Esophagus squamous epithelium (tissue), 5 donors: ENCODE measurements at regions of chr22 and their contacts with region 1.

Region 1: GRCh38 chr22:45429981-45430775 is 16.7 kb downstream of the RIBC2 start:
- DNase-seq: no peak
- H3K4me3 ChIP-seq: no peak overlapping the region
- H3K27ac ChIP-seq: no peak overlapping the region
- H3K4me1 ChIP-seq: peaks cover under 1 to 10% (median 2%) of the 10 kb centered on the region in 3 donors
- H3K27me3 ChIP-seq: no peaks in the 10 kb centered on the region
- CTCF ChIP-seq: no peak
- POLR2A ChIP-seq: no peak

Region 2: GRCh38 chr22:45271667-45272201 is 158.4 kb before region 1 on chr22:
- intact Hi-C with region 1: loop called (anchors 5 kb)
- DNase-seq: no peak
- H3K4me3 ChIP-seq: no peak overlapping the region
- H3K27ac ChIP-seq: peak overlapping the region; percentile 44 to 85 (median 76)
- H3K4me1 ChIP-seq: peaks cover 11 to 51% (median 19%) of the 10 kb centered on the region in 3 donors
- H3K27me3 ChIP-seq: no peaks in the 10 kb centered on the region
- CTCF ChIP-seq: no peak
- POLR2A ChIP-seq: peak in 1 of 4 donors; percentile 9

Region 3: GRCh38 chr22:45344334-45344733 is 85.8 kb before region 1 on chr22:
- intact Hi-C with region 1: no loop called
- DNase-seq: no peak
- H3K4me3 ChIP-seq: no peak overlapping the region
- H3K27ac ChIP-seq: no peak overlapping the region
- H3K4me1 ChIP-seq: no peaks in the 10 kb centered on the region
- H3K27me3 ChIP-seq: no peaks in the 10 kb centered on the region
- CTCF ChIP-seq: no peak
- POLR2A ChIP-seq: no peak